GM12878 (cell line): ENCODE measurements at regions of chr5 and their contacts with region 1.

Region 1: GRCh38 chr5:134637161-134637582 is 4.5 kb upstream of the SAR1B start:
- DNase-seq: no peak
- ATAC-seq: no peak
- H3K4me3 ChIP-seq: no peak overlapping the region
- H3K27ac ChIP-seq: no peak overlapping the region
- H3K4me1 ChIP-seq: peaks cover 8% of the 10 kb centered on the region
- H3K27me3 ChIP-seq: no peaks in the 10 kb centered on the region
- CTCF ChIP-seq: no peak
- EP300 ChIP-seq: no peak
- POLR2A ChIP-seq: no peak
- RAD21 ChIP-seq: no peak

Region 2: GRCh38 chr5:134648425-134649162 is 11.4 kb after region 1 on chr5 and contains the start of gene SEC24A:
- CTCF ChIA-PET with region 1: interaction called, 9 read pairs
- POLR2A ChIA-PET with region 1: interaction called, 22 read pairs
- RAD21 ChIA-PET with region 1: interaction called, 4 read pairs
- SMC1A ChIA-PET with region 1: interaction called, 31 read pairs
- in situ Hi-C with region 1: no loop called
- intact Hi-C with region 1: loop called (anchors 1 kb)
- DNase-seq: no peak
- ATAC-seq: peak; percentile 89
- H3K4me3 ChIP-seq: peak within 1 kb of the TSS; percentile 100
- H3K27ac ChIP-seq: peak within 1 kb of the TSS; percentile 98
- H3K4me1 ChIP-seq: peaks cover 18% of the 10 kb centered on the region
- H3K27me3 ChIP-seq: no peaks in the 10 kb centered on the region
- CTCF ChIP-seq: no peak
- EP300 ChIP-seq: peak in 1 of 2 experiments; percentile 40; a peak in 1 of 4 replicates
- POLR2A ChIP-seq: peak; percentile 91
- RAD21 ChIP-seq: no peak
- polyA plus RNA-seq, gene SEC24A: 7.1 to 12.5 TPM